AG04449 (cell line): ENCODE measurements at regions of chr4 and their contacts with region 1.

Region 1: DNA sequence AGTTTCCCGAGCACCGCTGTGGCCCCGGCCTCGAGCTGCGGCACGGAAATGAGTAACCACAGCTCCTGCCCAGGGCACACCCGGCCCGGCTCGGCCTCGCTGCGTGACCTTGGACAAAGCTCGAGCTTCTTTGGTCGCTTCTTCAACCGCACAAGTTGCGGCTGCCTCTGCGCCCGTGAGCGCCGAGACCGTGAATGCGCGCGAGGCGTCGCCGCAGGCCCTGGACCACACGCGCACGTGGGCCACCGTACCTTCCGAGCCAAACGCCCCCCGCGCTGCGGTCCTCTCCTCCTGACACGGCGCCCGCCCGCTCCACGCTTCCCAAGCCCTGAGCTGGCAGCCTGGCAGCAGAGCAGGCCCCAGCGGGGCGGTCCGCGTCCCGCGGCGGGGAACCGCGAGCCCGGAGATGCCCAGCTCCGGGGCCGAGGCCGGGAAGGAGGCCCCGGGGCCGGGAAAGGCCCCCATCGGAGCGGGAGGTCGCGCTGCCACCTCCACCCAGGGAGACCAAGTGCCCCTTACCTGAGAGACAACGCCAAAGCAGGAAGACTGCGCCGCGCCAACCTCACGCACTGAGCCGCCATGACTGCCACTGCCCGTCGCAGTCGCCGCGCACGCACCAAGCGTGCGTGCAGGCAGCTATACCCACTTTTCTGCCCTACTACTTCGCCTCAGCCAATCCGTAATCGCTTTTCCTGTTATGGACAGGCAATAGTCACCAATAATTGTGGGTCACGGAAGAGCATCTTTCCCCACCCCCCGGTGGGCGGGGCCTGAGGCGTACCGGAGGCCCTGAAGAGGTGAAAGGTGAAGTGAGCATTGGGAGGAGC is at the start of gene GRPEL1:
- DNase-seq: peak; percentile 96
- H3K4me3 ChIP-seq: peak within 1 kb of the TSS; percentile 89
- CTCF ChIP-seq: no peak

Region 2: DNA sequence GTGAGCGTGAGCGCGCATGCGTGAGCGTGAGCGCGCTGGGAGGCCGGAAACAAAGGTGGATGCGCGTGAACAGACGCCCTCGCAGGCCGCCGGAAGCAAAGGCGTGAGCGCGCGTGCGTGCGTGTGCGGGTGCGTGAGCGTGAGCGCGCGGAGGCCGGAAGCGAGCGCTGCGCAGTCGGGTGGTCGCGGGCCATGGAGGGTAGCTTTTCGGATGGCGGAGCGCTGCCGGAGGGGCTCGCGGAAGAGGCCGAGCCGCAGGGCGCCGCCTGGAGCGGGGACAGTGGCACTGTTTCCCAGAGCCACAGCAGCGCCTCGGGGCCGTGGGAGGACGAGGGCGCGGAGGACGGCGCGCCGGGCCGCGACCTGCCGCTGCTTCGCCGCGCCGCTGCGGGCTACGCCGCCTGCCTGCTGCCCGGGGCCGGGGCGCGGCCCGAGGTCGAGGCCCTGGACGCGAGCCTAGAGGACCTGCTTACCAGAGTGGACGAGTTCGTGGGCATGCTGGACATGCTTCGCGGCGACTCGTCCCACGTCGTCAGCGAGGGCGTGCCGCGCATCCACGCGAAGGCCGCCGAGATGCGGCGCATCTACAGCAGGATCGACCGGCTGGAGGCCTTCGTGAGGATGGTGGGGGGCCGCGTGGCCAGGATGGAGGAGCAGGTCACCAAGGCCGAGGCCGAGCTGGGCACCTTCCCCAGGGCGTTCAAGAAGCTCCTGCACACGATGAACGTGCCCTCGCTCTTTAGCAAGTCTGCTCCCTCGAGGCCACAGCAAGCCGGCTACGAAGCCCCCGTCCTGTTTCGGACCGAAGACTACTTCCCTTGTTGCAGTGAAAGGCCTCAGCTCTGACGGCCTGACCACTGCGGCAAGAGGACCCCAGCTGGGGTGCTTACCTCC is 351.4 kb before region 1 on chr4 and contains the start of gene BLOC1S4:
- CTCF ChIA-PET with region 1: interaction called, 119 read pairs
- POLR2A ChIA-PET with region 1: interaction called, 5 read pairs
- DNase-seq: no peak
- H3K4me3 ChIP-seq: peak within 1 kb of the TSS; percentile 92
- CTCF ChIP-seq: peak; percentile 24

Region 3: GRCh38 chr4:6909073-6909965 is 158.3 kb before region 1 on chr4 and contains the start of gene TBC1D14:
- CTCF ChIA-PET with region 1: interaction called, 72 read pairs
- POLR2A ChIA-PET with region 1: interaction called, 8 read pairs
- DNase-seq: no peak
- H3K4me3 ChIP-seq: peak within 1 kb of the TSS; percentile 71
- CTCF ChIP-seq: peak; percentile 21

Region 4: DNA sequence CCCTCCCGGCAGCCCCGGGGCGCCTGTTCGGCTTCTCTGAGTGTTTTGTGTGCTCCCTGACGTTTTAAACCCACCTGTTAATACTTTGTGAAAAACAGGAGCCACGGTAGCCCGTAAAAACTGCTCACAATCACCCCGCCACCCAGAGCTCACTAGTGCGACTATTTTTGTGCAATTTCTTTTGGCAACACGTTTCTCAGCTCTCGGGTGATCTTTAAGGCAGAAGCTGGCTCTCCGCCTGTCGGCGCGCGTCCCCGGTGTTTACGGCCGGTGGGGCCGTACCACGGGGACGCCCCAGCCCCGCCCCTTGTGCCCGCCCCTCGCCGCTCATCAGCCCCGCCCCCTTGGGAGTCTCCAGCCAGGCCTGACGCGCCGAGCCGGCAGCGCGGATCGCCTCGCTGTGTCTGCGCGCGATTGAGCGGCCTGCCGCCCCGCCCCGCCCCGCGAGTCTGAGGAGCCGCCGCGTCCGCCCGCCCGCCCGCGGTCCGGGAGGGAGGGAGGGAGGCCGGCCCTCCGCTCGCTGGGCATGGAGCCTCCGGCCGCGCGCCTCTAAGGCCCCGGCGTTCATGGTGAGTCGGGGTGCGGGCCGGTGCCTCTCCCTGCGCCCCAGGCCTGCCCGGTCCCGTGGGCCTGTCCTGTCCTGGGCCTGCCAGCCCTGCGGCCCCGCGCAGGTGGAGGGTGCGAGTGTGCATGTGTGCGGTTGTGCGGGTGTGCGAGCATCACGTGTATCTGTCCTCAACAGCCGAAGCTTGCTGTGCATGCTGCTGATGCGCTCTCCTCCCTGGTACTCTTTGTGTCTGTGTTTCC is 80.7 kb before region 1 on chr4:
- CTCF ChIA-PET with region 1: interaction called, 31 read pairs
- POLR2A ChIA-PET with region 1: interaction called, 11 read pairs
- DNase-seq: no peak
- H3K4me3 ChIP-seq: peak overlapping the region; percentile 98
- CTCF ChIP-seq: no peak

Region 5: DNA sequence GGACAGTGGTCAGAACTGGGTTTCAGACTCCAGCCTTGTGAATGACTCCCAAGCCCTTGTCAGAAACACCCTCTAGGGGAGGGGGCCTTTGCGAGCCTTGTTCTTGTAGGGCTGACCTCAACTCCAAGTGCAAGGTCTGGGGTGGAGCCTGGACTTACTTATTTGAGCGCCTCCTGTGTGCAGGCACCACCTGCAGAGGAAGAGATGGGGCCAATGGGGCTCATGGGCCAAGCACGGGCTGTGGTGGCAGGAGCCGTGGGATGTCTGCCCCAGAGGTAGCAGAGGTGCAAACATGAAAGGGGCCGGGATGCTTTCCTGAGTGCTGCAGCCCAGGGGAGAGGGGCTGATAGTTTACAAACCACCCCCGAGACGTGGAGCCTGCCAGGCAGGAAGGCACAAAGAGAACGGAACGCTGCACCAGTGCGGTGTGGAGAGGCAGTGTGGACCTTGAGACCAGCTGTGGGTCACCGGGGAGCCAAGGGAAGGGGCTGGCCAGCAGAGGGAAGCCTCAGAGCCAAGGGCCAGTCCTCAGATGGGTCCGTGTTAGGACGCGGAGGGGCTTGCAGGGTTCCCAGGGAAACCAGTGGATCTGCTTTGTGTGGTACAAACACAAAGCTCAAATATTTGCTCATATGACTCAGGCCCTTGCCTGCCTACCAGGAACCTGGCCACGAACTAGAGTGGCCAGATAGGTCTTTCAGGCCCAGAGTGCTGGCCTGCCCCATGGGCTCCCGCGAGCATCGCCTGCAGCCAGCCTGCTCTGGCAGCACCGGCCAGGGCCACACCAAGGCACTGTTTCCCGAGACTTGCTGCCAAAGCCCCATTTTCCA is 33.2 kb before region 1 on chr4:
- CTCF ChIA-PET with region 1: interaction called, 10 read pairs
- POLR2A ChIA-PET with region 1: no interaction called
- DNase-seq: no peak
- H3K4me3 ChIP-seq: no peak overlapping the region
- CTCF ChIP-seq: no peak

Region 6: GRCh38 chr4:7052923-7053715 is 14.5 kb before region 1 on chr4:
- CTCF ChIA-PET with region 1: interaction called, 101 read pairs
- POLR2A ChIA-PET with region 1: interaction called, 5 read pairs
- DNase-seq: no peak
- H3K4me3 ChIP-seq: no peak overlapping the region
- CTCF ChIP-seq: no peak

Region 7: DNA sequence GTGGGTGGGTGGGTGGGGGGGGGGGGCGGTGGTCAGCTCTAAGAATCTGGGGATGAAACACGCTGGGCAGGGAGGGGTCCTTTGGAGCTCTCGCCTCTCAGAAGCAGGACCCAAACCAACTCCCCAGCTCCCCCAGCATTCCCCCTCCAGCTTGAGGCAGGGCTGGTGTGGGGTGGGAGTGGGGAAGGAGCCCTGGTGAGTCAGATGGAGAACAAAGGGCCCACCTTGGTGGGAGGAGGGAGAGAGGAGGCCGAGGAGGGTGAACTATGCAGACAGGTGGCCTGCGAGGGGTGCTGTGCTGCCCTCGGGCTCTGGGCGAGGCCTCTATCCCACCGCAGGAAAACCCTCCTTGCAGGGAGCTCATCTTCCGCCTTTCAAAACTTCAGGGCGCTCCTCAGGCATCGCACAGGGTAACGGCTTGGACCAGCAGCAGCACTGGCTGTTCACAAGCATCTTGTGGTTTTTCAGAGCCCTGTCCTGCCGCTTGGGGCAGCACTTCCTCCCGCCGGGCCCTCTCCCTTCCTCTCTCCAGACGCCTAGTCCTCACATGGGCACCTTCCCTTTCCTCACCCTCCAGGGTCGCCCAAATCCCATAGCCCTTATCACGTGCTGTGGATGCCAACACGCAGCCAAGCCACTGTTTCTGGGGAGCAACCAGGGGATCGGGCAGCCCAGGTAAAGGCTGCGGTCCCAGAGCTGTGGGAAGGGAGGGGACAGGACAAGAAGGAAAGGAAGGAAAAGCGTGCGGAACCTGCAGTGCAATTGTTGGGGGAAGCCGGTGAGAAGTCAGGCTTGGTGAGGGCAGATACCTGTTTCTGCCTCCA is 34.2 kb after region 1 on chr4:
- CTCF ChIA-PET with region 1: interaction called, 41 read pairs
- POLR2A ChIA-PET with region 1: no interaction called
- DNase-seq: no peak
- H3K4me3 ChIP-seq: peak overlapping the region; percentile 43
- CTCF ChIP-seq: peak; percentile 84

Region 8: GRCh38 chr4:7392438-7393421 is 325.1 kb after region 1 on chr4:
- CTCF ChIA-PET with region 1: no interaction called
- POLR2A ChIA-PET with region 1: no interaction called
- DNase-seq: no peak
- H3K4me3 ChIP-seq: no peak overlapping the region
- CTCF ChIP-seq: no peak